ENCODE measurements at regions of chr1 and their contacts with region 1.

Region 1: GRCh38 chr1:94522304-94522703 is 19.3 kb downstream of the F3 start:
- DNase-seq: no peak

Region 2: DNA sequence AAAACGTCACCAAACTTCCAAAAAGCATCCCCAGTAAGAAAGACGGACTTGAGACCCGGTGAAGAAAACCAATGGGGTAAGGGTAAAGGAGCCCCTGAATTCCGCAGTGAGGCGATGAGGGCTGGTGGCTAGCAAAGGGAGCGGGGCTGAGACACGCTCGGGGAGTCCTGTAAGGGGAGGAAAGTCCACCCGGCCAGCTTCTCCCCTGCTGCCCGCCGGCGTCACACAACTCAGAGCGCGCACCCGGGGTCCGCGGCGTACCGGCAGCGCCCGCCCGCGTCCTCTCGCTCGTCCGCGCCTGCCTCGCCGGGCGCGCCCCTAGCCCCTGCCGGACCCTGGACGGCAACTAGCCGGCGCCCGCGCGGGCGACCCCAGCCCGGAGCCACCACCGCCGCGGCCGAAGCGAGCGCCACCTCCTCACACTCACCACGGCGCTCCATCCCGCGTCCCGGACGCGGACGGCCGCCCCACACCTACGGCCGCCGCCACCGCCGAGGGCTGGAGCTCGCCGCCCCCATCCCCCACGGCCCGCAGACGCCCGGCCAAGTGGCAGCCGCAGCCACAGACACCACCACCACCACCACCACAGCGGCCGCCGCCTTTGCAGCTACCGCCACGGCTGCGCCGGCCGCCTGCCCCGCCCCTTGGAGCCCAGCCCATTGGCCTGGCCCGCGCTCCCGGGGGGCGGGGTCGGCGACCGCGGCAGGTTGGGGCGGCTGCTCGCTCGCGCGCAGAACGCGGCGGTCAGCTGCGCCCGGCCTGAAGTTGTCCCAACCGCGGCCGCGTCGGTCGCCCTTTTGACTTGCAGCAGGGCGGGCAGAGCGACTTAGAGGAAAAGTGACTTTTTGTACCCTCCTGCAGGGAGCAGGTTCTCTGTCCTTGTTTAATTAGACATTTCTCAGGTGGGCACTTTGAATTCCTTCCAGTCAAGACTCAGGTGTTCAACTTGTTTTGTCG is 274.9 kb before region 1 on chr1:
- intact Hi-C with region 1: no loop called
- DNase-seq: peak; percentile 93

Region 3: DNA sequence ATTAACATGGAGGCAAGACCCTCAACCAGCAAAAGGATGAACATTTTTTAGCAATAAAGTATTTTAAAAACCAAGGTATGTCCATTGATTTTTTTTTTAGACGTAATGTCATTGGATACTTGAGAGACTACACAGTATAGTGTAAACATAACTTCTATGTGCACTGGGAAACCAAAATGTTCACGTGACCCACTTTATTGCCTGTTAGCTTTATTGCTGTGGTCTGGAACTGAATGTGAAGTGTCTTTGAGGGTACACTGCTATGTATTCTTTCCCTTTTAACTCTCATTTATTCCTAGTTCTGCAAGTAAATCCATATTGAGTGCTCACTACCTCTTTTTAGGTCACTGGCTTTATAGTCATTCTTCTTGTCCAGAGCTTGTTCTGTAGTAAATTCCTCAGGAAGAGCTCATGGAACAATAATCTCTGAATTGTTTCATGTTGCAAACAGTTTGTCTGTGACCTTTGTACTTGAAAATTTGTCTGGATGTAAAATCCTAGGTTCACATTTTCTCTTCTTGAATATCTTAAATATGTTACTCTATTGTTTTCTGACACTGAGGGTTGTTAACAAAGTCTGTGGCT is 83.5 kb before region 1 on chr1:
- intact Hi-C with region 1: no loop called
- DNase-seq: no peak

Region 4: DNA sequence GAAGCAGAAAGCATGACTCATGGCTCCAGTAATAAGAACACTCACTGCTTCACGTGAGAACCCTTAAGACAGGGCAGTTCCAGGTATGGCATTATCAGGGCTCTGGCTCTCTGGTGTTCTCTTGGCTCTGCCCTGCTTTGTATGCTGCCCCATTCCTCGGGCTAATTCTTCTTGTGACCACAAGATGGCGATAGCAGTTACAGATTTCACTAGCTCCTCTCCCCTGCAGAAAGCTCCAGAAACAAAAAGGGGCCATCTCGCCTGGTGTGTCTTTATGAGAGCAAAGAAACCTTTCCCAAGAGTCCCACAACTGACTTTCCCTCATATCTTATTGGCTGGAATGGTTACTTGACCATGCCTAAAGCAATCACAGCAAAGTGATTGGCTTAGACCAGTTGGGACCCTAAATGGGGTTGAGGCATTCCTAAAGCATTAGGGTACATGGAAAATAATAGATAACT is 40.8 kb before region 1 on chr1:
- intact Hi-C with region 1: loop called (anchors 5 kb)
- DNase-seq: no peak

Region 5: GRCh38 chr1:94599095-94599813 is 77.0 kb after region 1 on chr1:
- intact Hi-C with region 1: loop called (anchors 5 kb)
- DNase-seq: no peak

Region 6: DNA sequence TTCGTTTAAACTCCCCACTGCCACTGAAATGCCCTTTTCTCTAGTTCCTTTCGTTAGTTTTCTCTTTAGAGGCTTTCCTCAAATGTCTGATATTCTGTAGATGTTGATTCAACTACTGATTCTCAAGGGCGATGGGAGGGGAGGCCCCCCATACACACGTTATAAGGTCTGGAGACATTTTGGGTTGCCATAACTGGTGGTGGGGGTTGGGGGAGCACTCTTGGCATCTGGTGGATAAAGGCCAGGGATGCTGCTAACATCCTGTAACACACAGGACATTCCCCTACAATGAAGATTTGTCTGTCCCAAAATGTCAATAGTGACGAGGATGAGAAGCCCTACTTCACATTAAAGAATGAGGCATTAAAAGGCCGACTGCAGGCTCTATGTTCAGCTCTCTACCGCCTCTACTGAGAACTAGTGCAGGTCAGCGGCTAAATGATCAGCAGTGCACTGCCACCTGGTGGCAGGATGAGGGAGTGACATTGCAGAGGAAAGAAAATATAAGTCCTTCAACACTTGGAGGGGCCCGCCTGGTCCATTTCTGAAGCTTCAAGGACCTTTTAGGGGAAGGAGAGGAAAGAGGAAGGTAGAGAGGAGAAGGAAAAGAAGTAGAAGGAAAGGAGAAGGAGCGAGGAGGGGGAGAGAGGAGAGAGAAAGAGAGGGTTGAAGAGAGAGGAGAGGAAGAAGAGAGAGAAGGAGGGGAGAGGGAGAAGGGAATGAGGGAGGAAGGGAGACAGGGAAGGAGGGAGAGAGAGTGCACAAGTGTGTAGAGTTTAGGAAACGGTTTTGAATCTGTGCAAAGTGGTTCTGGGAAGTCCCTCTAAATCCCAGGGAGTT is 521.1 kb after region 1 on chr1:
- intact Hi-C with region 1: loop called (anchors 5 kb)
- DNase-seq: peak; percentile 91